PC-3 (cell line): ENCODE measurements at regions of chr6 and their contacts with region 1.

Region 1: DNA sequence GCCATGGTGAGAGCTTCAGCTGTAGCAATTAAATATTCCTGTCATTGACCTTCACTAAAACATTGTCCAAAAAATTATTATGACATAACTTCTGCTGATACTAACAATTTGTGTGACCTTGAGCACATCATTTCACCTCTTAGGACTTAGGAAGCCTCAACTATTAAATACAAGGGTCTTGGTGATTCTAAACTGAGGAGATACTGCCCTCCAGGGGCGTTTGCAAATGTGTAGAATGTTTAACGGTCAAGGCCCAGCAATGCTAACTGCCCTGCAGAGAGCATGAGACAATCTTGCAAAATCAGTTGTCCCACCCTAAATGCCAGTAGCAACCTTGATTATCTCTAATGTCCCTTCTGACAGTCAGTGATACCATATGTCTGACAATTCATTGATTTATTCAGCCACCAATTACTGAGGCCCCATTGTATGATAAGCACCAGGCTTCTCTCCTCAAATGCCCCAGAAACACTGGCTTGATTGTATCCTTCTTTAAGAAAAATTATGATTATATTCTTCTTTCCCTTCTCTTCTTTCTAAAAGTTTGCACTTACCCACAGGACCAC is 284.1 kb upstream of the PLN start:
- DNase-seq: peak; percentile 27
- ATAC-seq: peak; percentile 46; the same call in 1 of the 2 replicates
- H3K4me3 ChIP-seq: no peak overlapping the region
- H3K27ac ChIP-seq: no peak overlapping the region
- H3K4me1 ChIP-seq: no peaks in the 10 kb centered on the region
- H3K27me3 ChIP-seq: 0 out of 2 replicates have a peak, but pooled peaks cover 9% of the 10 kb centered on the region
- CTCF ChIP-seq: peak; percentile 51; the same call in 1 of the 2 replicates

Region 2: DNA sequence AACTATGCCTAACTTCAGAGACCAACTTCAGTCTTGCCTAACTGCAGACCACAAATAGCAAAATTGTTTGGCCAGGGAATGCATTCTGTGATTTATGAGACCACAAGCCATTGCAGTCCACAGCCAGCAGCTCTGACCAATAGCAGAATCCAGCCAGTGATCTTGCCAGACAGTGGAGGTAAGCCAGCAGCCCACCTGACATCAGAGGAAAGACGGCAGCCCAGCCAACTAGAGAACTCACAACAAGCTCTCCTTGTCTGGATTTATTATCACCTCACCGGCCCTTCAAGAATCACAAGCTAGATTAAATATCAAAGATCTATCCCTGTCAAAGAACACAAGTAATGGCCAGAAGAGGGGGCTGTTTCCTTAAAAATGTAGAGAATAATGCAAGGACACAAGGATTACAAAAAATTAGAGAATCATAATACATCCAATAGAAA is 423.4 kb before region 1 on chr6:
- CTCF ChIA-PET with region 1: no interaction called
- POLR2A ChIA-PET with region 1: no interaction called
- intact Hi-C with region 1: loop called (anchors 2 kb)
- DNase-seq: peak; percentile 65
- ATAC-seq: peak; percentile 54
- H3K4me3 ChIP-seq: no peak overlapping the region
- H3K27ac ChIP-seq: no peak overlapping the region
- H3K4me1 ChIP-seq: no peaks in the 10 kb centered on the region
- H3K27me3 ChIP-seq: no peaks in the 10 kb centered on the region
- CTCF ChIP-seq: peak; percentile 68

Region 3: DNA sequence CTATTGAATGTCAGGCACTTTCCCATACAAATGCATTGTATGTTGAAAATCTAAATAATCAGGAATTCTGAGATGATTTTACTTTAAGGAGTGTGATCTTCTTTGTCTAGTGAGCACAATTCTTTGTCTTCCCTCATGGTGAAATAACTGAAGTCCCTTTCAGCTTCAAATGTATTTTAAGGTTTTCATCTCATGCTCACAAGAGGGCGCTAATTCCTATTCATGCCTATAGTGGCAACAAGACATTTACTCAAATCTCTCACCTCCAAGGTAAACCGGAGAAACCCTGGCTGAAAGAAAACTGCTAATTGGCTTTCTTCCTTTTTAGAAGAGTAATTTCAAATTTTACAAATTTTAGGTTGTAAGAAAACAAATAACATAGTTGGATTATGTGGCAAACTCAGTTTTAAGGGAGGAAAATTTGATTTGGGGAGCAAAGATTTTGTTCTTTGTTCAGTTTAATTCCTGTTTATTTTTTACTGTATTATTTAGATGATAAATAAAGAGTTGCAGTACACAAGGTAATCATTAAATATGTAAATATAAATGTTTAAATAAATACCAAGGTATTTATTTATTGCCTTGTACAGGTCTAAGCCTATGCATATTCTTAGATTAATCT is 287.9 kb before region 1 on chr6:
- CTCF ChIA-PET with region 1: no interaction called
- POLR2A ChIA-PET with region 1: no interaction called
- intact Hi-C with region 1: loop called (anchors 1 kb)
- DNase-seq: peak; percentile 61
- ATAC-seq: no peak
- H3K4me3 ChIP-seq: no peak overlapping the region
- H3K27ac ChIP-seq: no peak overlapping the region
- H3K4me1 ChIP-seq: no peaks in the 10 kb centered on the region
- H3K27me3 ChIP-seq: no peaks in the 10 kb centered on the region
- CTCF ChIP-seq: peak; percentile 75

Region 4: DNA sequence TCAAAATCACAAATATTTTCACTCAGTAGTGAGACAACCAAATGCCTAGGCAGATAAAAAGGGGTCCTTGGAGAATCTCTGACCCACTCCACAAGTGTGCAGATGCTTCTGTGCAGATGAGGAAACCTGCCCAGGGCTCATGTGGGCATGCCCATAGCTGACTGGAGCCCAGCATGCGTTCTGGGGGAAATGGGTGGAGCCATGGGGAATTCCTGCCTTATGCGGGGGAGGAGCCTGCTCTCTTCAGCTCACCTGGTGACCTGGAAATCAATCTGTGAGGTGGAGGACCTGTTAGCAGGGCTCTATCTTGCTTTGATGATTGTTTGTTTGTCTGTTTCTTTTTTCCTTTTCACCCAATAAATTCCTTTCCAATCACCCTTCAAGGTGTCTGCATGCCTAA is 260.7 kb after region 1 on chr6:
- CTCF ChIA-PET with region 1: no interaction called
- POLR2A ChIA-PET with region 1: no interaction called
- intact Hi-C with region 1: no loop called
- DNase-seq: no peak
- ATAC-seq: no peak
- H3K4me3 ChIP-seq: no peak overlapping the region
- H3K27ac ChIP-seq: no peak overlapping the region
- H3K4me1 ChIP-seq: no peaks in the 10 kb centered on the region
- H3K27me3 ChIP-seq: no peaks in the 10 kb centered on the region
- CTCF ChIP-seq: no peak